ENCODE measurements at regions of chr9 and their contacts with region 1.

Region 1: GRCh38 chr9:128927731-128928411 is 7.1 kb downstream of the PHYHD1 start:
- DNase-seq: peak; percentile 70 to 83
- ATAC-seq: peak; percentile 93 to 94
- H3K4me3 ChIP-seq: no peak overlapping the region
- H3K27ac ChIP-seq: peak overlapping the region; percentile 65 to 72; a peak in 5 of 6 replicates
- H3K4me1 ChIP-seq: peaks cover 4% of the 10 kb centered on the region
- CTCF ChIP-seq: peak; percentile 93
- EP300 ChIP-seq: no peak
- POLR2A ChIP-seq: no peak
- RAD21 ChIP-seq: peak; percentile 98 to 99

Region 2: DNA sequence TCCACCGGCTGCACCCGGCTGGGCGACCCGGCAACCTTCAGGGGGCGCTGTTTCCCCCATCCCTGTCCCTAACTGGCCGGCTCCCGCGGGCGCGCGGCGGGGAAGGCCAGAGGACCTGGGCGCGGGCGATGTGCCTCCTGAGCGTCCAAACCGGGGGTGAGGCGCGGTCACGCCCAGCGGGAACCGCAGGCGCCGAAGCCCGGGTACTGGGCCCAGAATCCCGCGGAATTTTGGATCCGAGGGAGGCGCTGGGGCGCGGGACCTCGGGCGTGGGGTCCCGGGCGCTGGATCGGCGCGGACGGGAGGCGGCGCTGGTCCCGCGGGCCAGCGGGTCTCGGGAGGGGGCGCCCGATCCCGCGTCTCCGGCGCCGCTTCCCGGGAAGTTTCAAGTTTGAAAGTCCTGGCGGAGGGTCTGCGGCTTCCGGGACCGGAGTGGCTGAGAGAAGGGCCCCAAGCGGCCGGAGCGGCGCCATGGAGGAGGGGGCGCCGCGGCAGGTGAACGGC is 225.4 kb before region 1 on chr9 and contains the start of gene PKN3:
- CTCF ChIA-PET with region 1: interaction called, 13 read pairs
- POLR2A ChIA-PET with region 1: no interaction called
- DNase-seq: peak; percentile 89 to 98
- ATAC-seq: peak; percentile 83 to 89
- H3K4me3 ChIP-seq: peak within 1 kb of the TSS; percentile 94
- H3K27ac ChIP-seq: peak within 1 kb of the TSS; percentile 95 to 100
- H3K4me1 ChIP-seq: peaks cover 9% of the 10 kb centered on the region
- CTCF ChIP-seq: peak; percentile 99
- EP300 ChIP-seq: no peak
- POLR2A ChIP-seq: peak; percentile 25
- RAD21 ChIP-seq: peak; percentile 35 to 61; a peak in 4 of 5 replicates
- polyA plus RNA-seq, gene PKN3: 7.6 and 9.0 TPM in 2 replicates

Region 3: DNA sequence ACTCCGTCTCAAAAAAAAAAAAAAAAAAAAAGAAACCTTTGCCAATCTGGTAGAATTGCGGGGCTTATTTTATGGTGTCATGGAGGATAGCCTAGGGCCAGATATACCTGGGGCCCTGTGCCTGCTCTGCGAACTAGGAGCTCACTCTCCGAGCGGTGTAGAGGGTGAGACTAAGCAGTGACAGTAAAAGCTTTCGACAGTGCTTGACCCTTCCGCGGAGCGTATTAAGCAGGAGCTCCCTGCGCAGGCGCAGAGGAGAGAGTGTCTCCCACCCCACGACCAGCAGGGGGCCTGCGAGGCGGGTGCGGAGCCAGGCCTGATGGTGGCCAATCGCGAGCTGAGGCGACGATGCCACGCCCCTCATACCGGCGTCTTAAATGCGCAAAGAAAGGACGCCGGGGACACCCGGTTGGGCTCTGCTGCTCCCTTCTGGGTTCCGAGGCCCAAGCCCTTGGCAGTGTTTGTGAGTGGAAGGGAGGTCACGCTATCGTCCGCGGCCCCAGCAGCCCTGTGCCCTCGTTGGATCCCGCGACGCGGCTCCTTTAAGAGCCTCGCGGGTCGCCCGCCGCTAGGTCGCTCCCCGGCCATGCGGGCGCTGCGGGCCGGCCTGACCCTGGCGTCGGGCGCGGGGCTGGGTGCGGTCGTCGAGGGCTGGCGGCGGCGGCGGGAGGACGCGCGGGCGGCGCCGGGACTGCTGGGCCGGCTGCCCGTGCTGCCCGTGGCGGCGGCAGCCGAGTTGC is 109.6 kb before region 1 on chr9 and contains the start of gene ENDOG:
- CTCF ChIA-PET with region 1: interaction called, 51 read pairs
- POLR2A ChIA-PET with region 1: no interaction called
- DNase-seq: peak; percentile 97 to 98
- ATAC-seq: peak; percentile 86 to 92
- H3K4me3 ChIP-seq: peak within 1 kb of the TSS; percentile 76
- H3K27ac ChIP-seq: peak within 1 kb of the TSS; percentile 90 to 93
- H3K4me1 ChIP-seq: peaks cover 11% of the 10 kb centered on the region
- CTCF ChIP-seq: peak; percentile 72
- EP300 ChIP-seq: no peak
- POLR2A ChIP-seq: peak; percentile 96
- RAD21 ChIP-seq: peak; percentile 22 to 31; a peak in 1 of 5 replicates
- polyA plus RNA-seq, gene ENDOG: 12.6 and 12.8 TPM in 2 replicates

Region 4: GRCh38 chr9:128863647-128864046 is 64.2 kb before region 1 on chr9:
- CTCF ChIA-PET with region 1: interaction called, 244 read pairs
- POLR2A ChIA-PET with region 1: no interaction called
- DNase-seq: peak; percentile 78 to 82
- ATAC-seq: peak; percentile 96 to 99
- H3K4me3 ChIP-seq: no peak overlapping the region
- H3K27ac ChIP-seq: peak overlapping the region; percentile 62 to 79; a peak in 4 of 6 replicates
- H3K4me1 ChIP-seq: peaks cover 16% of the 10 kb centered on the region; the same call in 2 of the 3 replicates
- CTCF ChIP-seq: peak; percentile 87
- EP300 ChIP-seq: no peak
- POLR2A ChIP-seq: no peak
- RAD21 ChIP-seq: peak; percentile 86 to 88

Region 5: DNA sequence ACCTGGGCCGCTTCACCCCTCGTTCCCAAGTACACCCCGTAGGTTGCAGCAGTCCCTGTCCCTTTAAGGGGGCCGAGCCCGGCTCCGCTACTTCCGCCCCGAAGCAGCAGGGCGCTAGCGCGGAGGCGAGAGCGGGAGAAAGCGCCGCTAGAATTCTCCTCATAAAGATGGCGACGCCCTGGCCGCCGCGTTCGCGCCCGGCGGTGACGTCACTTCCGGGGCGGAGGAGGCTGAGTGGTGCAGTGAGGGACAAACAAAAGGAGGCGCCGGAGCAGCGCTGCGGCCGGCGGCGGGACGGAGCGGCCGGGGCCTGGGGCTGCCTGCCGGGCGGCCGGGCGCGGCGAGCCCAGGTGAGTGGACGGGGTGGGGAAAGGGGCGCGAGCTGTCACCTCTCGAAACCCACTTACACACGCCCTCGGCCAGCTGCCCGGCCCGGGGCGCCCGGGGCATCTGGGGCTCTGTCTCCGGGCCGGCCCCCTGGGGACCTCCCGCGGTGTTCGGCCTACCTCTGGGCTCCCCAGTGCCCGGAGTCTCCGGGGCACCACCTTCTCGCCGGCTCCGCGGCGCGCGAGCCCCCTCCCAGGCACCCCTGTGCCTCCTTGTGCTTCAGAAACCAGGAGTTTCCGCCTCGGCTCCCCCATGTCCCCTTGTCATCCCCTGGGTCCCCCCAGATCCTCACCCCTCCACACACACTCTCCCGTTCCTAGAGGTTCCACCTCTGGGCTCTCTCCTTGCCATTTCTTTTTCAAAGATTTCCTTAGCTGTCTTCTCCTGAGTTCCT is 45.8 kb before region 1 on chr9 and contains the starts of genes KYAT1 and LRRC8A:
- CTCF ChIA-PET with region 1: interaction called, 85 read pairs
- POLR2A ChIA-PET with region 1: no interaction called
- DNase-seq: peak; percentile 95 to 96
- ATAC-seq: peak; percentile 92 to 94
- H3K4me3 ChIP-seq: peak within 1 kb of the TSS; percentile 93
- H3K27ac ChIP-seq: peak within 1 kb of the TSS; percentile 96 to 98
- H3K4me1 ChIP-seq: peaks cover 45% of the 10 kb centered on the region
- CTCF ChIP-seq: peak; percentile 13; the same call in 1 of the 3 replicates
- EP300 ChIP-seq: no peak
- POLR2A ChIP-seq: peak; percentile 84
- RAD21 ChIP-seq: 0 out of 5 replicates have a peak, but pooled peaks of 1 of the 2 experiments have one; percentile 16
- polyA plus RNA-seq, gene KYAT1: 10.0 and 12.2 TPM in 2 replicates
- polyA plus RNA-seq, gene LRRC8A: 25.9 and 29.2 TPM in 2 replicates

Region 6: DNA sequence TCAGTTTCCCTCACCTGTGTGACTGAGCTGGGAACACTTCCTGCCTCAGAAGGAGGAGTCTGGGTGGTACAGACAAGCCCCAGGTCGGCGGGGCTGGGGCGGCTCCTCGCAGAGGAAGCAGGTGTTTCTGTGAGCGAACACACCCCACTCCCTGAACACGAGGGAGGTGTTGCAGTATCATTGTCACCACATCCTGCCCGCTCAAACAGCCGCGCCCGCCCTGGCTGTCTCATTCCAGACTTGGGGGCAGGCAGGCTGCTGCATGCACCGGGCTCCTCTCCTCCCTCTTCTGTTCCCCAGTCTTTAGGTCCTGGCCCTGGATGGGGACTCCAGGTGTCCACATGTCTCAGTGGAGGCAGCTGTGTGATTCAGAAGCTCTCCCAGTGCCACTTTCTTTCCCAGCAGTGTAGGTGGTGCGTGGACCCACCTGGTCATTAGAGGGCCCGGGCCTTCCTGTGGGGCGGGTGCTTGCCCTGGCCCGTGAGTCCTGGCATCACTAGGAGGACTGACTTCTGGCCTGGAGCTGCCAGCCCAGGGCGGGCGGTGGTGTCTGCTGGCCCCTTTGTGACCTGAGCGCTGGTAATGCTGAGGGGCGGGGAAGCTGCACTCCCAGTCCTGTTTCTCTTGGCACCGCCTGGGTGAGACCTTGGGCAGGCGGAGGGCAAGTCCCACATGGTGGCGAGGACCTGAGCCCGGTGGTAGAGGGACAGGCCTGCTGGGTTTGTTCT is 25.4 kb before region 1 on chr9:
- CTCF ChIA-PET with region 1: interaction called, 24 read pairs
- POLR2A ChIA-PET with region 1: no interaction called
- DNase-seq: no peak
- ATAC-seq: peak; percentile 15 to 28; a peak in 5 of 6 replicates
- H3K4me3 ChIP-seq: no peak overlapping the region
- H3K27ac ChIP-seq: peak overlapping the region; percentile 57 to 63
- H3K4me1 ChIP-seq: peaks cover 47% of the 10 kb centered on the region
- CTCF ChIP-seq: no peak
- EP300 ChIP-seq: no peak
- POLR2A ChIP-seq: no peak
- RAD21 ChIP-seq: no peak

Region 7: GRCh38 chr9:128946571-128947421 is 18.9 kb after region 1 on chr9:
- CTCF ChIA-PET with region 1: interaction called, 45 read pairs
- POLR2A ChIA-PET with region 1: no interaction called
- DNase-seq: peak in 1 of 2 experiments; percentile 24
- ATAC-seq: peak; percentile 56 to 58
- H3K4me3 ChIP-seq: peak overlapping the region; percentile 85
- H3K27ac ChIP-seq: peak overlapping the region; percentile 91 to 95
- H3K4me1 ChIP-seq: peaks cover 12% of the 10 kb centered on the region; the same call in 2 of the 3 replicates
- CTCF ChIP-seq: no peak
- EP300 ChIP-seq: no peak
- POLR2A ChIP-seq: no peak
- RAD21 ChIP-seq: no peak

Measured in A549 (cell line).